Panc1 (cell line): ENCODE measurements at regions of chr6 and their contacts with region 1.

Region 1: GRCh38 chr6:10369881-10370280 is 45.0 kb downstream of the TFAP2A start:
- DNase-seq: peak; percentile 86
- ATAC-seq: peak; percentile 83
- H3K4me3 ChIP-seq: no peak overlapping the region
- H3K27ac ChIP-seq: peak overlapping the region; percentile 45; the same call in 1 of the 2 replicates
- H3K4me1 ChIP-seq: peaks cover 27% of the 10 kb centered on the region
- H3K27me3 ChIP-seq: no peaks in the 10 kb centered on the region
- CTCF ChIP-seq: no peak

Region 2: DNA sequence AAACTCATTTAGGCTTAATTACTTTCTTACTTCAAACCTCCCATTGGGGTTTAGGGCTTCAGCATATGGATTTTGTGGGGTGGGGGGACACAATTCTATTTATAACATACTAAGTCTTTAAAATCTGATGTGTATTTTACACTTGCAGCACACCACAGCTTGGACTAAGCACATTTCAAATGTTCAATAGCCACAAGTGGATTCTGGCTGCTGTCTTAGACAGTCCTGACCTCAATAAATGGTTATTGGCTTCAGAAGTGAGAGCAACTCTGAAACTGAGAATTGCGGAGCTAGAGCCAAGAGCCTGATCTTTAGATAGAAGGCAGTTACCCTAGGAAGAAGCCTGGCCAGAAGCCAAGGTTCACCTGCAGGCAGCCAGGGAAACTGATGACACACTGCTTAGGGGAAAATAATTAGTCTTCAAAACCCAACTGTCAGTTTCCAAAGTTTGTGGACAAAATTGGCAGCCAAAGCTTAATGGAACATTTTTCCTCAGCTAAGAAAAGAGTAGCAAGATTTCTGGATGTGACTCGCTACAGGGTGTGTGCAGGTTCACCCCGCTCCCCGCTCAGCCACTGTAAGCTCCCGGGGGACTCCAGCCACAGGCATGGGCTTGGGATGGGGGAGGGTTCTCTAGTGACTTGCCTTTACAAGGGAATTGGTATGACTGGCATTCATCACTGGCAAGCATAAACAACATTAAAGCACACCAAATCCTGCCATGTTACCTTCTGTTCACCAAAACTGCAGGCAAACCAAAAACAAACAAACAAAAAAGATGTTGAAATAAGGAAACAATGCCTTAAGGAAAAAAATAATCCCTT is 174.9 kb before region 1 on chr6:
- CTCF ChIA-PET with region 1: no interaction called
- POLR2A ChIA-PET with region 1: no interaction called
- in situ Hi-C with region 1: loop called (anchors 10 kb)
- intact Hi-C with region 1: no loop called
- DNase-seq: no peak
- ATAC-seq: no peak
- H3K4me3 ChIP-seq: no peak overlapping the region
- H3K27ac ChIP-seq: peak overlapping the region; percentile 48
- H3K4me1 ChIP-seq: peaks cover 6% of the 10 kb centered on the region
- H3K27me3 ChIP-seq: no peaks in the 10 kb centered on the region
- CTCF ChIP-seq: no peak

Region 3: DNA sequence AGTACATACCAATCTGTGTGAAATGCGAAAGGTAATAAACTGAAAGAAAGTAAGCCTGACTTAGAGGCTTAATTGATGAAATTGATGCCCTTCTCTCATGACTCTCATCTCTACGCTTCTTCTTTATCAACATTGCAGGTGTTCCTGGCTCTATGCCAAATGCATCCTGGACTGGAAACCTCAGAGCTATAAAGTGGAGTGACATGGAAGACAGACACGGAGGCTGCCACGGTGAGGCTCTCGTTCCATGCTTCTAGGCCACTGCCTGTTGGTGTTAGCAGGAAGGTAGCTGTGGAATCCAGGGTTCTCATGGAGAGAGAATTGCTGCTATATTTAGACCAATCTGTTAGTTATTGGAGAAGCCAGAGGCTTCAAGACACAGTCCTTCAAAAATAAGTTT is 251.3 kb after region 1 on chr6:
- CTCF ChIA-PET with region 1: no interaction called
- POLR2A ChIA-PET with region 1: no interaction called
- in situ Hi-C with region 1: no loop called
- intact Hi-C with region 1: no loop called
- DNase-seq: no peak
- ATAC-seq: no peak
- H3K4me3 ChIP-seq: no peak overlapping the region
- H3K27ac ChIP-seq: no peak overlapping the region
- H3K4me1 ChIP-seq: no peaks in the 10 kb centered on the region
- H3K27me3 ChIP-seq: no peaks in the 10 kb centered on the region
- CTCF ChIP-seq: no peak

Region 4: DNA sequence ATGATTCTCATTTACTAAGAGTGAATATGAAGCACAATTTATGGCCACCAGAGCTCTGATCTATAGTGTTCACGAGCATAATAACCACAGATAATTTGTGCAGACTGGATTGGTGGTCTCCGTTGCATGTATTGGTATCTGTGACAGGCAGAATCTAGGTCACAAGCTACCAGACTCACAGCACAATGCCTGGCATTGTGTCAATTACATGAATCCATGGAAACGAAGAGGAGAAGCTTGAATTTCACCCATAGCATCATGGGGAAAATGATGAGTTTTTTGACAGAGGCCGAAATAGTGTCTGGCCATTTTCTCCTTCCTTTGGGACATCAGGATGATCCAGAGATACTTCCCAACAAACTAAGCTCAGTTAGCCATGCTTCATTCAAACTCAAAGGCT is 1115.4 kb after region 1 on chr6:
- CTCF ChIA-PET with region 1: no interaction called
- POLR2A ChIA-PET with region 1: no interaction called
- in situ Hi-C with region 1: no loop called
- intact Hi-C with region 1: no loop called
- DNase-seq: no peak
- ATAC-seq: no peak
- H3K4me3 ChIP-seq: no peak overlapping the region
- H3K27ac ChIP-seq: no peak overlapping the region
- H3K4me1 ChIP-seq: no peaks in the 10 kb centered on the region
- H3K27me3 ChIP-seq: peaks cover 4% of the 10 kb centered on the region; the same call in 1 of the 2 replicates
- CTCF ChIP-seq: no peak